IMR-90 (cell line): ENCODE measurements at regions of chr1 and their contacts with region 1.

Region 1: GRCh38 chr1:165630629-165631341 is at the start of gene MGST3:
- DNase-seq: peak; percentile 95
- ATAC-seq: peak; percentile 93
- H3K4me3 ChIP-seq: peak within 1 kb of the TSS; percentile 74
- H3K27ac ChIP-seq: peak within 1 kb of the TSS; percentile 88
- H3K4me1 ChIP-seq: peaks cover 2% of the 10 kb centered on the region
- H3K27me3 ChIP-seq: no peaks in the 10 kb centered on the region
- CTCF ChIP-seq: no peak
- POLR2A ChIP-seq: peak; percentile 42; the same call in 1 of the 2 replicates
- RAD21 ChIP-seq: no peak
- total RNA-seq, gene MGST3: 132 and 159 TPM in 2 replicates

Region 2: GRCh38 chr1:165697881-165698760 is 67.3 kb after region 1 on chr1 and contains the start of gene ALDH9A1:
- CTCF ChIA-PET with region 1: no interaction called
- POLR2A ChIA-PET with region 1: no interaction called
- dilution Hi-C with region 1: no loop called
- in situ Hi-C with region 1: no loop called
- intact Hi-C with region 1: loop called (anchors 1 kb)
- DNase-seq: peak; percentile 76
- ATAC-seq: peak; percentile 96
- H3K4me3 ChIP-seq: peak within 1 kb of the TSS; percentile 70
- H3K27ac ChIP-seq: peak within 1 kb of the TSS; percentile 94
- H3K4me1 ChIP-seq: no peaks in the 10 kb centered on the region
- H3K27me3 ChIP-seq: no peaks in the 10 kb centered on the region
- CTCF ChIP-seq: peak; percentile 23; the same call in 1 of the 2 replicates
- POLR2A ChIP-seq: peak; percentile 61; the same call in 1 of the 2 replicates
- RAD21 ChIP-seq: no peak
- total RNA-seq, gene ALDH9A1: 43.7 and 101 TPM in 2 replicates